ENCODE measurements at regions of chr1 and their contacts with region 1.

Region 1: GRCh38 chr1:51690285-51690961 is 73.5 kb downstream of the OSBPL9 start:
- DNase-seq: no peak
- ATAC-seq: no peak
- H3K4me3 ChIP-seq: no peak overlapping the region
- H3K27ac ChIP-seq: peak overlapping the region; percentile 21 to 73 (median 55)
- H3K4me1 ChIP-seq: peaks cover 74 to 81% of the 10 kb centered on the region in 2 donors
- H3K27me3 ChIP-seq: no peaks in the 10 kb centered on the region
- CTCF ChIP-seq: no peak
- POLR2A ChIP-seq: no peak

Region 2: DNA sequence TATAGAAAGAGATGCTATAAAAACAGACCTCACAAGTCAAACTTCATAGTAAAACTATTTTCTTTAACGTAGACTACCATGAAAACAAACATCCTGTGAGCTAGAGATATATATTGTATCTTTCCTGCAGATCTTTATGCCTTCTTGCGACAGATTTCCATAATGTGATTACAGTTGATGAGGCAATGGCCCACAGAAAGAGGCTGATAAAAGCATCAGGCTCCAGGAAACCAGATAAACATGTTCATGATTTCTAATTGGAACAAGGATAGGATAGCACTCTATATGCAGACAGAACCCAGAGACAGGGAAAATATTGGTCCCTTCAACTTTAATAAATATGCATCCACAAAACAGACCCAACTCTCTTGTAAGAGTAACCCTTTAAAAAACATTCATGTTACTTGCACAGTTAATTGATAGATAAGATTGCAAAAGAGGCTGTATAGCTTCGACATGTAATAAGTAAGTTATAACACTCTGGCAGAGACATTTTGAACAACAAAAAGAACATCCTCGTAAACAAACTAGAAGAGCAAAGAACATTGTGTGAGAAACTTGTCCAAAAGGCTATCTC is 1996.1 kb before region 1 on chr1:
- in situ Hi-C with region 1: no loop called
- intact Hi-C with region 1: no loop called
- DNase-seq: no peak
- ATAC-seq: no peak
- H3K4me3 ChIP-seq: no peak overlapping the region
- H3K27ac ChIP-seq: no peak overlapping the region
- H3K4me1 ChIP-seq: no peaks in the 10 kb centered on the region
- H3K27me3 ChIP-seq: no peaks in the 10 kb centered on the region
- CTCF ChIP-seq: no peak
- POLR2A ChIP-seq: no peak

Region 3: DNA sequence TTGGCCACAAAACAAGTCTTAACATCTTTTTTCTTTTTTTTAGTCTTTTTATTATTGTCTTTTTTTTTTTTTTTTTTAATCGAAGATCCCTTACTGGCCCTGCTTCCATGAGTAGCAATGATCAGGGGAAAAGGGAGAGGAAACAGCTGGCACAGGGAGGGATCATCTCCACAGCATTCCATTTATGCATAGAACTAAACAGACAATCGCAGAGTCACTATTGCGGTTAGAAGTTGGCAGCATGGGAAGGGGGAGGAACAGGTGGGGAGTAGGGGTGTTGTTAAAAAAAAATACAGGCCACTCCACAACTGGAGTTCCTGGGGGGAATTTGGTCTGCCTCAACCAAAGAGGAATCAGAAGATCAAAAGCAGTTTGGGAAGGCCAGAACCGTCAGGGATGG is 533.0 kb before region 1 on chr1:
- in situ Hi-C with region 1: no loop called
- intact Hi-C with region 1: no loop called
- DNase-seq: no peak
- ATAC-seq: no peak
- H3K4me3 ChIP-seq: no peak overlapping the region
- H3K27ac ChIP-seq: no peak overlapping the region
- H3K4me1 ChIP-seq: no peaks in the 10 kb centered on the region
- H3K27me3 ChIP-seq: no peaks in the 10 kb centered on the region
- CTCF ChIP-seq: no peak
- POLR2A ChIP-seq: no peak

Region 4: GRCh38 chr1:51331206-51332100 is 359.0 kb before region 1 on chr1:
- in situ Hi-C with region 1: no loop called
- intact Hi-C with region 1: no loop called
- DNase-seq: peak; percentile 54 to 73
- ATAC-seq: peak; percentile 88 to 90
- H3K4me3 ChIP-seq: peak overlapping the region; percentile 52 to 70 (median 62)
- H3K27ac ChIP-seq: peak overlapping the region; percentile 31 to 74 (median 66)
- H3K4me1 ChIP-seq: peaks cover 7 to 12% of the 10 kb centered on the region in 2 donors
- H3K27me3 ChIP-seq: no peaks in the 10 kb centered on the region
- CTCF ChIP-seq: no peak
- POLR2A ChIP-seq: no peak

Region 5: DNA sequence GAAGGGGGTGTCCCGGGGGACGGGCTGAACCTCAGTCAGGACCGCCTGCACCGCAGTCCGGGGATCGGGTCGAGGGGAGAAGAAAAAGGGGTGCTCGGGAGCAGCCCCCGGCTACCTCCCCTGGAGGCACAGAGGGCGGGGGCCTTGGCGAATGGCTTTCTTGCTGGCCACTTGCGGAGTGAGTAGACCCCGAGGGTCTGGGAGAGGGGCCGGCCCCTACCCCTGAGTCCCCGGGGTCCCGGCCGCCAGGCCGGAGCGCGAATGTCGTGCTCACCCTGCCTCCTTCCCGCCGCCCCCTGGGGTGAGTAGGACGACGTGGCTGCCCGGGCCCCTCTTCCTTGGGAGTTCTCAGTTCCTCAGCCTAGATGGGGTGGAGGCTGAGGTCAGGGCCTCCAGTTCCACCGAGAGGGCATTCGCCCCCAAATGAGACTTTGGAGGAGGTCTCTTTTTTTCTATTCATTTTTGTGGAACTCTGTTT is 39.4 kb after region 1 on chr1:
- in situ Hi-C with region 1: no loop called
- intact Hi-C with region 1: loop called (anchors 5 kb)
- DNase-seq: no peak
- ATAC-seq: no peak
- H3K4me3 ChIP-seq: peak overlapping the region; percentile 45 to 54 (median 50)
- H3K27ac ChIP-seq: peak overlapping the region; percentile 9 to 67 (median 59)
- H3K4me1 ChIP-seq: peaks cover 83 to 88% of the 10 kb centered on the region in 2 donors
- H3K27me3 ChIP-seq: no peaks in the 10 kb centered on the region
- CTCF ChIP-seq: no peak
- POLR2A ChIP-seq: no peak